ENCODE measurements at regions of chr11 and their contacts with region 1.

Region 1: GRCh38 chr11:75554258-75555022 is 7.6 kb upstream of the SERPINH1 start:
- DNase-seq: peak; percentile 95 to 98 (median 96)
- ATAC-seq: peak; percentile 90 to 95 (median 94)
- H3K4me3 ChIP-seq: peak overlapping the region in 8 of 12 donors; percentile 24 to 50 (median 34)
- H3K27ac ChIP-seq: peak overlapping the region; percentile 57 to 94 (median 83)
- H3K4me1 ChIP-seq: peaks cover 13 to 55% (median 44%) of the 10 kb centered on the region in 12 donors
- H3K27me3 ChIP-seq: no peaks in the 10 kb centered on the region
- CTCF ChIP-seq: no peak
- POLR2A ChIP-seq: peak in 1 of 2 donors; percentile 61

Region 2: GRCh38 chr11:75582895-75583717 is 28.7 kb after region 1 on chr11:
- intact Hi-C with region 1: loop called in 2 of 10 experiments (anchors 2 kb)
- DNase-seq: peak; percentile 71 to 86 (median 78)
- ATAC-seq: peak; percentile 70 to 89 (median 72)
- H3K4me3 ChIP-seq: peak overlapping the region; percentile 66 to 99 (median 76)
- H3K27ac ChIP-seq: peak overlapping the region; percentile 81 to 99 (median 97)
- H3K4me1 ChIP-seq: peaks cover 0 to 31% (median 19%) of the 10 kb centered on the region in 12 donors
- H3K27me3 ChIP-seq: no peaks in the 10 kb centered on the region
- CTCF ChIP-seq: peak in 9 of 12 donors; percentile 6 to 52 (median 39)
- POLR2A ChIP-seq: peak in 1 of 2 donors; percentile 48

Measured in heart left ventricle (tissue), 16 donors.